ENCODE measurements at regions of chr5 and their contacts with region 1.

Region 1: DNA sequence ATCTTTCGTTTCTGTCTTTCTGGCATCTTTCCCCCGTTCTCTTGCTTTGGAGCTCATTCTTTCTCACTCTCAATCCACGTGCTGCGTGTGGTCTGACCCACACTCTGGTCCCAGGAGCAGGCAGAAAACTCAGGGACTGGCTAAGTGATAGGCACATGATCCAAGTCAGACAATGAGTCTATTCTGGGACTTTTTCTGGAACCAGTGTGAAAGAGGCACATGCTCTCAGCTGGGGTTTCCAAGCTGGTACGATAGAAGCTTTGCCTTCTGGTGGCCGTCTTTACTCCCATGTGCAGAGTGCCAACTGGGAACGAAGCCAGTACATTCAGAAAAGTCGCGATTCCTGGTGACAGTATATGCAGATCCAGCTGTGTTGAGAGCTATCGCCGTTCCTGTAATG is 94.4 kb downstream of the PDZD2 start:
- DNase-seq: peak in 4 of 5 donors; percentile 34 to 64 (median 44)
- ATAC-seq: peak; percentile 63 to 88 (median 84)
- H3K4me3 ChIP-seq: no peak overlapping the region
- H3K27ac ChIP-seq: peak overlapping the region in 10 of 12 donors; percentile 31 to 72 (median 52)
- H3K4me1 ChIP-seq: peaks cover 0 to 65% (median 27%) of the 10 kb centered on the region in 12 donors
- H3K27me3 ChIP-seq: no peaks in the 10 kb centered on the region
- CTCF ChIP-seq: no peak
- POLR2A ChIP-seq: no peak

Region 2: GRCh38 chr5:31671339-31671741 is 62.0 kb before region 1 on chr5:
- intact Hi-C with region 1: loop called in 1 of 10 experiments (anchors 10 kb)
- DNase-seq: peak; percentile 41 to 73 (median 62)
- ATAC-seq: peak; percentile 89 to 94 (median 90)
- H3K4me3 ChIP-seq: no peak overlapping the region
- H3K27ac ChIP-seq: peak overlapping the region in 10 of 12 donors; percentile 2 to 79 (median 58)
- H3K4me1 ChIP-seq: peaks cover 0 to 49% (median 29%) of the 10 kb centered on the region in 12 donors
- H3K27me3 ChIP-seq: no peaks in the 10 kb centered on the region
- CTCF ChIP-seq: no peak
- POLR2A ChIP-seq: no peak

Region 3: DNA sequence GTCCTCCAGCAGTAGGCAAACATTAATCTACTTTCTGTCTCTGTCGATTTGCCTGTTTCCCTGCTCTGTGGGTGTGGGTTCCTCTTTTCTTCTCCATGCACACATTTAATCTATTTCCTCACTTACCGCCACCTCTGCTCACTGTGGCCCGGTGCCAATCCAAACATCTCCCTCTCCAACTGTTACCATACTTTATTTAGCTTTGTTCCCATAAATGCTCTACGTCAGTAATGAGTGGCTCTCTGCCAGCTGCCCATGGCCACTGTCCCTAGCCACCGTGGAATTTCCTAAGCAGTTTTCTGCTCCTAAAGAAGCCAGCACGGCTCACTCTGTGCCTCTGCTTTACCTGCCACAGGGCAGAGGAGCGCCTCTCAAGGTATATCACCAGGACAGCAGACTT is 460.2 kb after region 1 on chr5:
- intact Hi-C with region 1: no loop called
- DNase-seq: peak; percentile 88 to 93 (median 90)
- ATAC-seq: peak; percentile 74 to 93 (median 89)
- H3K4me3 ChIP-seq: peak overlapping the region in 7 of 12 donors; percentile 4 to 25 (median 17)
- H3K27ac ChIP-seq: peak overlapping the region in 7 of 12 donors; percentile 28 to 65 (median 41)
- H3K4me1 ChIP-seq: peaks cover 0 to 18% (median 11%) of the 10 kb centered on the region in 12 donors
- H3K27me3 ChIP-seq: no peaks in the 10 kb centered on the region
- CTCF ChIP-seq: no peak
- POLR2A ChIP-seq: no peak